Activated naive CD4-positive, alpha-beta T cell treated with anti-CD3 and anti-CD28 coated beads for 36 hours (primary cell): ENCODE measurements at regions of chr10 and their contacts with region 1.

Region 1: GRCh38 chr10:127243490-127244272 is 47.3 kb upstream of the INSYN2A start:
- DNase-seq: peak; percentile 57
- H3K4me3 Mint-ChIP-seq: no peak overlapping the region
- H3K27ac Mint-ChIP-seq: no peak overlapping the region
- H3K4me1 Mint-ChIP-seq: no peaks in the 10 kb centered on the region
- H3K27me3 Mint-ChIP-seq: peaks cover 13% of the 10 kb centered on the region

Region 2: DNA sequence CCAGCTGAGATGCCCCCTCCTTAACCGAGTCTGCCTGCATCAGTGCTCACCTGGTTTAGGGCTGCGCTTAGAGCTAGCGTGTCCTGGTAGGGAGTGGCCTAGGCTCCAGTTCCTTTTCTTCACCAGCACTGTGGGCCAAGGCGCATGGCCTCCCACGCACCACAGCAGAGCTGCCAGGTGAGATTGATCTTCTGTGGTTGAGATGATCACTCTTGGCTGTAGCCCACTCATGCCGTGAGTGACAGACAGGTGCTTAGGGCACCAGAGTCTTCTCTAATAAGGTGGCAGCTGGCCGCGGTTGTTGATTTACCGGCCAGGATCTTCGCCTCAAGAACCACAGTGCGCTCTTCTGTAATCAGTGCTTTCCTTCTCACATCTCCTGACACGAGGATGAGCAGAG is 109.9 kb after region 1 on chr10:
- CTCF ChIA-PET with region 1: no interaction called
- intact Hi-C with region 1: loop called (anchors 1 kb)
- DNase-seq: no peak
- H3K4me3 Mint-ChIP-seq: no peak overlapping the region
- H3K27ac Mint-ChIP-seq: no peak overlapping the region
- H3K4me1 Mint-ChIP-seq: no peaks in the 10 kb centered on the region
- H3K27me3 Mint-ChIP-seq: no peaks in the 10 kb centered on the region

Region 3: DNA sequence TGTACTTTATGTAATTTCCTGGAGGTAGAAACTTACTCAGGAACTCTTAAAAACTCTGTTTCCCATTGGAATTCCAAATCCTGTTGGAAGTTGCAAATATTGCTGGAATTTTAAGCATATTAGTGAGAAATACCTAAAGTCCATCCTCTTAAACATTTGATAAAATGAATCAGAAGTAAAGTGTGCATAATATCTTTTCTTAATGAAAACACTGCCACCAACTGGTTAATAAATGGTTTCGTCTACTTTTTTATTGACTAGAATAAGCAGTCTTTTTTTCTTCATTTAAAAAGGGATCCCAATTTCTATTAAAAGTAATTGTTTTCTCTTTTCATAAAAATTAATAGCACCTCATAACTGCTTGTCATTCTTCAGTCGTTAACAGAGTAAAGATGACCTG is 333.7 kb after region 1 on chr10:
- CTCF ChIA-PET with region 1: no interaction called
- intact Hi-C with region 1: loop called (anchors 10 kb)
- DNase-seq: no peak
- H3K4me3 Mint-ChIP-seq: no peak overlapping the region
- H3K27ac Mint-ChIP-seq: no peak overlapping the region
- H3K4me1 Mint-ChIP-seq: no peaks in the 10 kb centered on the region
- H3K27me3 Mint-ChIP-seq: peaks cover 12% of the 10 kb centered on the region

Region 4: GRCh38 chr10:127853868-127854768 is 610.4 kb after region 1 on chr10:
- CTCF ChIA-PET with region 1: no interaction called
- intact Hi-C with region 1: loop called (anchors 2 kb)
- DNase-seq: peak; percentile 61
- H3K4me3 Mint-ChIP-seq: no peak overlapping the region
- H3K27ac Mint-ChIP-seq: no peak overlapping the region
- H3K4me1 Mint-ChIP-seq: no peaks in the 10 kb centered on the region
- H3K27me3 Mint-ChIP-seq: peaks cover 3% of the 10 kb centered on the region